PC-3 (cell line): ENCODE measurements at regions of chr12 and their contacts with region 1.

Region 1: DNA sequence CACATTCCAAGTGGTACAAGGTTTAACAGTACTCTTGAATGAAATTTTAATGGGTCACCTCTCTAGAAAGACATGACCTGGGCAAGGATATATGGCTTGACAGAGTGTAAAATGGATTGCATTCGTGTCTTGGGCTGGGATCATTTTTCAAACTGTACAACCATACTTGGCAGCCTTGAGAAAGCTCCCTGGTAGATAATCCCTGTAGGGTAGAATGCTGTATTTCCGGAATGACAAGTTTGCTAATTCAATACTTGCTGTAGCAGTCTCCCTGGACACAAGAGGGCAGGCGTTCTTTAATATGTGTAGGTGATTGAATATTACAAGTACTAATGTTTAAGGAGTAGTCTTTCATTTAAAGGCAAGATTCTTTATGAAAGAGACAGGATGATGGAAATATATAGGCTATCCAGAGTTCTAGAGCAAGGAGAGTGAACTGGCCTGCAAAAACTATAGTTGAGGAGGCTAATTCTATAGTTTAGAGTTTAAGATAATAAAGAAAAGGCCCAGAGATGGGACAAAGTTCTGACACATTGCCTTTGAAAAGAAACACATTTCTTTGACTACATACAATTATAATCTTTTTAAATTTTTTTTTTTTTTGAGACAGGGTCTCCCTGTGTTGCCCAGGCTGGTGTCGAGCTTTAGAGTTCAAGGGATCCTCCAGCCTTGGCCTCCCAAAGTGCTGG is 53.4 kb downstream of the PLBD1 start:
- DNase-seq: peak; percentile 93
- ATAC-seq: peak; percentile 87
- H3K4me3 ChIP-seq: no peak overlapping the region
- H3K27ac ChIP-seq: no peak overlapping the region
- H3K4me1 ChIP-seq: peaks cover 4% of the 10 kb centered on the region; the same call in 1 of the 2 replicates
- H3K27me3 ChIP-seq: no peaks in the 10 kb centered on the region
- CTCF ChIP-seq: peak; percentile 75

Region 2: GRCh38 chr12:14577344-14577743 is 63.0 kb after region 1 on chr12:
- CTCF ChIA-PET with region 1: interaction called, 12 read pairs
- POLR2A ChIA-PET with region 1: no interaction called
- intact Hi-C with region 1: no loop called
- DNase-seq: no peak
- ATAC-seq: no peak
- H3K4me3 ChIP-seq: no peak overlapping the region
- H3K27ac ChIP-seq: no peak overlapping the region
- H3K4me1 ChIP-seq: no peaks in the 10 kb centered on the region
- H3K27me3 ChIP-seq: no peaks in the 10 kb centered on the region
- CTCF ChIP-seq: no peak

Region 3: DNA sequence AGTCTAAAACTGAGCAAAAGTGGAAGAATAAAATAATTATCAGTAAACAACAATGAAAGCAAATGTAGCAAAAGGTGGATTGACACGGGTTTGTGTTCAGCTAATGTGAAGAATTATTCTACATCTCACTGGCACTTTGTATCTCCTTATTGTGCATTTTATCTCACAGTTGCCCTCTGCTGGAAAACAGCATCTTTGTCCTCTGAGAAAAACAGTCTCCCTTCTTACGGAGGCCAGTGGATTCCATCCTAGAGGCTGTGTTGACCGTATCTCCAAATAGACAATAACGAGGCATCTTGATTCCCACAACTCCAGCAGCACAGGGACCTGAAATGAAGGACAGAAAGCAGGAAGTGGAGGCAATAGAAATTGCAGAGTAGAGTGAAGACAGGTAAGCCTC is 104.7 kb after region 1 on chr12:
- CTCF ChIA-PET with region 1: interaction called, 9 read pairs
- POLR2A ChIA-PET with region 1: no interaction called
- intact Hi-C with region 1: loop called (anchors 1 kb)
- DNase-seq: peak; percentile 30
- ATAC-seq: peak; percentile 42; the same call in 1 of the 2 replicates
- H3K4me3 ChIP-seq: no peak overlapping the region
- H3K27ac ChIP-seq: no peak overlapping the region
- H3K4me1 ChIP-seq: no peaks in the 10 kb centered on the region
- H3K27me3 ChIP-seq: no peaks in the 10 kb centered on the region
- CTCF ChIP-seq: peak; percentile 62

Region 4: DNA sequence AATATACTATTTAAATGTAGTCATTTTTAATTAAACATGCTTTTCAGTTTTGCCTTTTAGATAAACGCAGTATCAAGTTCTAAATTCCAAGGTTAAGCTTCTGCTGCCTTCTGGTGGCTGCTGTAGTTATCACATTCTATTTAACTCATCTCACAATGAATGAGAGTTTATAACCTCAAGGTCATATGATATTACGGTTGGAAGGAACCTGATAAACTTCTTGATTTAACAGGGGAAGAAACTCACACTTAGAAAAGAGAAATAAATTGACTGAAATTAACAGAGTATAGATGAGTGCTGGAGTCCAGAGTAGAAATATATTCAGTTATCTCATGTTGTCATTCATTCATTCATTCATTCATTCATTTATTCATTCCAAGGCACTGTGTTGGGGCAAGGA is 150.2 kb after region 1 on chr12:
- CTCF ChIA-PET with region 1: interaction called, 5 read pairs
- POLR2A ChIA-PET with region 1: no interaction called
- intact Hi-C with region 1: loop called (anchors 1 kb)
- DNase-seq: peak; percentile 66
- ATAC-seq: 0 out of 2 replicates have a peak, but pooled peaks have one; percentile 35
- H3K4me3 ChIP-seq: no peak overlapping the region
- H3K27ac ChIP-seq: no peak overlapping the region
- H3K4me1 ChIP-seq: no peaks in the 10 kb centered on the region
- H3K27me3 ChIP-seq: peaks cover 4% of the 10 kb centered on the region; the same call in 1 of the 2 replicates
- CTCF ChIP-seq: peak; percentile 60; the same call in 1 of the 2 replicates